ENCODE measurements at regions of chr6 and their contacts with region 1.

Region 1: GRCh38 chr6:166382933-166383801 is at the start of gene MPC1:
- DNase-seq: peak; percentile 88 to 97 (median 93)
- ATAC-seq: peak; percentile 92
- H3K4me3 ChIP-seq: peak within 1 kb of the TSS; percentile 74 to 77
- H3K4me3 Mint-ChIP-seq: peak within 1 kb of the TSS; percentile 95
- H3K27ac ChIP-seq: peak within 1 kb of the TSS; percentile 73 to 75
- H3K27ac Mint-ChIP-seq: peak within 1 kb of the TSS; percentile 92
- H3K4me1 ChIP-seq: peaks cover 7% of the 10 kb centered on the region
- H3K4me1 Mint-ChIP-seq: peaks cover 14% of the 10 kb centered on the region
- H3K27me3 ChIP-seq: no peaks in the 10 kb centered on the region
- H3K27me3 Mint-ChIP-seq: no peaks in the 10 kb centered on the region
- CTCF ChIP-seq: no peak
- total RNA-seq, gene MPC1: 18.4 to 22.2 TPM

Region 2: GRCh38 chr6:166275714-166276166 is 107.4 kb before region 1 on chr6:
- CTCF ChIA-PET with region 1: interaction called, 11 read pairs
- POLR2A ChIA-PET with region 1: no interaction called
- intact Hi-C with region 1: loop called (anchors 1 to 2 kb)
- DNase-seq: peak; percentile 74 to 90 (median 82)
- ATAC-seq: peak; percentile 97
- H3K4me3 ChIP-seq: no peak overlapping the region
- H3K4me3 Mint-ChIP-seq: no peak overlapping the region
- H3K27ac ChIP-seq: no peak overlapping the region
- H3K27ac Mint-ChIP-seq: no peak overlapping the region
- H3K4me1 ChIP-seq: peaks cover 4% of the 10 kb centered on the region
- H3K4me1 Mint-ChIP-seq: peaks cover 6% of the 10 kb centered on the region
- H3K27me3 ChIP-seq: peaks cover 0 to 3% of the 10 kb centered on the region in 2 experiments
- H3K27me3 Mint-ChIP-seq: peaks cover 2% of the 10 kb centered on the region
- CTCF ChIP-seq: peak; percentile 100

Region 3: DNA sequence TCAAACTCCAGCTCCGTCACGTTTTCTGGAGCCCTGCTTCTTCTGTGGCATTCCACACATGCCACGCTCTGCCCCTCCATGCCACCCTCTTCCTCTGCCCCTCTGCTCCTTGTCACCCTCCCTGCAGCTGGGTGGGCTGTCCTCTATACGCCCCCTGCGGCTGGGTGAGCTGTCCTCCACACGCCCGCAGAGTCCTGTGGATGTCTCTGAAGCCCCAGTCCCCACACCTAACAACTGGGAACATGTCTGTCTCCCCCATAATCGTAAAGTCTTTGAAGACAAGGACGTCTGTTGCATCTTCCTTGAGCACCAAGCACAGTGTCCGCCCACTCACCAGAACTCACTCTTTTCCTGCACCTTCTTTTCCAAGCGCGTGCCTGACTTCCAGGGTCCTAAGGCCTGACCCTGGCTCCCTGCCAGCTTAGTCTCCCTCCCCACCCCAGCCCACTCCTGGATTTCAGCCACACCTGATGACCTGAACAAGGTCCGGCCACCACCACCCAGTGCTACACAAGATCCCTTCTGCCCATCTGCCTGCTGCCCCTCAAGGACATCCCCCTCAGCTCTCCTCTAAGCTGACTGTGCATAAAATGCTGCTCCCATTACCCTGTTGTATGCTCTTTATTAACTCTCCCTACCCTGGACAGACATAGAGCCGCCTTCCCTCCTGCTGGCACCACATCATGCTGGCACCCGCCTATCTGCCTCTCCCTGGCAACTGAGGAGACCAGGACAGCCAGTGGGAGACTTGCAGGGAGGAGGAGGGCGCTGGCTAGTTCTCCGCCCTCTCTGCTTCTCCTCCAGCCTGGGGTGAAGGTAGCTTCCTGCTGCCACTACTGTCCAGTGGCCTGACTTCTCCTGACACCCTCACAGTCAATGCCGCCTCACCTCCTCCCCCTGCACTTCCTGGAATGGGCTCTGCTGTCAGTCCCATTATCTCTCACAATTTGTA is 64.2 kb before region 1 on chr6:
- CTCF ChIA-PET with region 1: interaction called, 28 read pairs
- POLR2A ChIA-PET with region 1: interaction called, 3 read pairs
- intact Hi-C with region 1: no loop called
- DNase-seq: peak in 1 of 9 experiments; percentile 7
- ATAC-seq: no peak
- H3K4me3 ChIP-seq: no peak overlapping the region
- H3K4me3 Mint-ChIP-seq: no peak overlapping the region
- H3K27ac ChIP-seq: no peak overlapping the region
- H3K27ac Mint-ChIP-seq: peak overlapping the region; percentile 55
- H3K4me1 ChIP-seq: no peaks in the 10 kb centered on the region
- H3K4me1 Mint-ChIP-seq: no peaks in the 10 kb centered on the region
- H3K27me3 ChIP-seq: no peaks in the 10 kb centered on the region
- H3K27me3 Mint-ChIP-seq: no peaks in the 10 kb centered on the region
- CTCF ChIP-seq: no peak

Region 4: GRCh38 chr6:166402582-166403277 is 19.6 kb after region 1 on chr6:
- CTCF ChIA-PET with region 1: interaction called, 42 read pairs
- POLR2A ChIA-PET with region 1: interaction called, 4 read pairs
- intact Hi-C with region 1: loop called in 1 of 2 experiments (anchors 1 kb)
- DNase-seq: no peak
- ATAC-seq: no peak
- H3K4me3 ChIP-seq: no peak overlapping the region
- H3K4me3 Mint-ChIP-seq: no peak overlapping the region
- H3K27ac ChIP-seq: no peak overlapping the region
- H3K27ac Mint-ChIP-seq: no peak overlapping the region
- H3K4me1 ChIP-seq: no peaks in the 10 kb centered on the region
- H3K4me1 Mint-ChIP-seq: peaks cover 6% of the 10 kb centered on the region
- H3K27me3 ChIP-seq: no peaks in the 10 kb centered on the region
- H3K27me3 Mint-ChIP-seq: no peaks in the 10 kb centered on the region
- CTCF ChIP-seq: no peak

Region 5: DNA sequence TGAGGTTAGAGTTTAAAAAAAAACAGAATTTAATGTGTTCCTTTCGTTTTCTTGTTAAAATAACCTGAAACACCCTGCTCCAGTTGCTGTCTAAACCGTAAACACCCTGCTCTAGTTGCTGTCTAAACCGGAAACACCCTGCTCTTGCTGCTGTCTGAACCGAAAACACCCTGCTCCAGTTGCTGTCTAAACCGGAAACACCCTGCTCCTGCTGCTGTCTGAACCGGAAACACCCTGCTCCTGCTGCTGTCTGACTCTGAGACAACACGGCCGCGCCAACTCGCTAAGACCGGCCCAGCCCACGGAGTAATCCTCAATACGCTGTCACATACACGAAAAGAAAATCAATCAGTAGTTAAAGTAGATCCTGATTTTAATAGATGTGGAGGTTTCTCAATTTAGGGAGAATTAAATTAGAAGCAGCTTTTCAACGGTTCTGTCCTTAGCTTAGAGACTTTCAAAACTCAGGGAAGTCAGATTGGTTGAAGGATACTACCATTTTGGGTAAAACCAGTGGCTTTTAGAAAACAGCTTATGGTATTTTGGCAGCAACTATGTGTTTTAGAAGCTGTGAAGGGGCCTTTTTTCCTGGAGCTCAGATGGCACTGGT is 105.0 kb after region 1 on chr6:
- CTCF ChIA-PET with region 1: no interaction called
- POLR2A ChIA-PET with region 1: interaction called, 4 read pairs
- intact Hi-C with region 1: loop called in 1 of 2 experiments (anchors 2 kb)
- DNase-seq: peak; percentile 61 to 95 (median 80)
- ATAC-seq: peak; percentile 95
- H3K4me3 ChIP-seq: peak overlapping the region; percentile 9 to 11
- H3K4me3 Mint-ChIP-seq: peak overlapping the region; percentile 77
- H3K27ac ChIP-seq: peak overlapping the region; percentile 64 to 84
- H3K27ac Mint-ChIP-seq: peak overlapping the region; percentile 99
- H3K4me1 ChIP-seq: peaks cover 19% of the 10 kb centered on the region
- H3K4me1 Mint-ChIP-seq: peaks cover 25% of the 10 kb centered on the region
- H3K27me3 ChIP-seq: no peaks in the 10 kb centered on the region
- H3K27me3 Mint-ChIP-seq: no peaks in the 10 kb centered on the region
- CTCF ChIP-seq: no peak

Region 6: DNA sequence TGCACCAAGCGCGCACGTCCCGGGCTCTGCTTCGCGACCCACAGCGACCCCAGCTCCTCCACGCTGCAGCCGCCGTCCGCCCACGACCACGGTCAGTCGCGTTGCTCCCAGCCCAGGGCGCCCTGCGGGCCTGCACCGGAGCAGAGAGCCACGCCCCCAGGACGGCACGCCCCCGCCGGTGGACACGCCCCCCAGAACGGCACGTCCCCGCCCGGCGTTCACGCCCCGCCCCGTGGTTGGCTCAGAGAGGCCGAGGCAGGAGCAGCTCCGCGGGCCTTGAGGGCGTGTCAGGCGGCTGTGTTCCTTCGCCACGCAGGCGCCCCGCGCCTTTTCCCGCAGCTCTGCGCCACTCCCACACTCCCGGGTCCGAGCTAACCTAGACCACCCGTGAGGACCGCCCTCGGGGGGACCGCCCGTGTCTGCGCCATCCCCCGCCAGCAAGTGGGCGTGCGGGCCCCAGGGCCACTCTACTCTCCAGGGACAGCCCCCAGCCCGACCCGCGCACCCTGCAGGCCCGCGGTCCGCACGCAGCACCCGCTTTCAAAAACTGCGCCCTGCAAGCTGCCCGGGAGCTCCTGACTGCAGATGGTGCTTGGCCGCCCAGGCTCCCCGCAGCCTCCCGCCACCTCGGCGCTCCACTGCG is 573.4 kb after region 1 on chr6 and contains the start of gene RNASET2:
- CTCF ChIA-PET with region 1: no interaction called
- POLR2A ChIA-PET with region 1: no interaction called
- intact Hi-C with region 1: loop called in 1 of 2 experiments (anchors 1 kb)
- DNase-seq: peak; percentile 96 to 100 (median 99)
- ATAC-seq: peak; percentile 87
- H3K4me3 ChIP-seq: peak within 1 kb of the TSS; percentile 74 to 75
- H3K4me3 Mint-ChIP-seq: peak within 1 kb of the TSS; percentile 93
- H3K27ac ChIP-seq: peak within 1 kb of the TSS; percentile 81 to 86
- H3K27ac Mint-ChIP-seq: peak within 1 kb of the TSS; percentile 98
- H3K4me1 ChIP-seq: peaks cover 68% of the 10 kb centered on the region
- H3K4me1 Mint-ChIP-seq: peaks cover 70% of the 10 kb centered on the region
- H3K27me3 ChIP-seq: no peaks in the 10 kb centered on the region
- H3K27me3 Mint-ChIP-seq: no peaks in the 10 kb centered on the region
- CTCF ChIP-seq: no peak
- total RNA-seq, gene RNASET2: 93.1 to 98.9 TPM

Region 7: DNA sequence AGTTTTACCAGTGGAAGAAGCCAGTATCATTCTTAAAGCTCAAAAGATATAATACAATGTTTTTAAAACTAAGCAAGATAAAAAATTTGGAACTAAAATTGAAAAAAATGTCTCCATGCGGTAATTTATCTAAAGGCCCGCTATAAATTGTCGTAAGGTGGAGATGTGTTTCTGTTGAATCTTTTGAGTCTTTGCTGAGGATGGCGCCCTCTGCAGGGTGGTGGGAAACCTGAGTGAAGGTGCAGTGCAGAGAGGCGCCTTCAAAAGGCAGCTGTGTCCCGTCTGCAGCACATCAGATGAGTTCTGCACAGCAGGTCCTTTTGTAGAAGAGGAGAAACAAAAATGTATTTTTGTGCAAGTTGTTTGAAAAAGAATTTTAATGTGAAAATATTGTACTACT is 1584.9 kb after region 1 on chr6:
- CTCF ChIA-PET with region 1: no interaction called
- POLR2A ChIA-PET with region 1: no interaction called
- intact Hi-C with region 1: no loop called
- DNase-seq: no peak
- ATAC-seq: no peak
- H3K4me3 ChIP-seq: no peak overlapping the region
- H3K4me3 Mint-ChIP-seq: no peak overlapping the region
- H3K27ac ChIP-seq: no peak overlapping the region
- H3K27ac Mint-ChIP-seq: no peak overlapping the region
- H3K4me1 ChIP-seq: no peaks in the 10 kb centered on the region
- H3K4me1 Mint-ChIP-seq: no peaks in the 10 kb centered on the region
- H3K27me3 ChIP-seq: no peaks in the 10 kb centered on the region
- H3K27me3 Mint-ChIP-seq: no peaks in the 10 kb centered on the region
- CTCF ChIP-seq: no peak